Caco-2 (cell line): ENCODE measurements at regions of chr3 and their contacts with region 1.

Region 1: DNA sequence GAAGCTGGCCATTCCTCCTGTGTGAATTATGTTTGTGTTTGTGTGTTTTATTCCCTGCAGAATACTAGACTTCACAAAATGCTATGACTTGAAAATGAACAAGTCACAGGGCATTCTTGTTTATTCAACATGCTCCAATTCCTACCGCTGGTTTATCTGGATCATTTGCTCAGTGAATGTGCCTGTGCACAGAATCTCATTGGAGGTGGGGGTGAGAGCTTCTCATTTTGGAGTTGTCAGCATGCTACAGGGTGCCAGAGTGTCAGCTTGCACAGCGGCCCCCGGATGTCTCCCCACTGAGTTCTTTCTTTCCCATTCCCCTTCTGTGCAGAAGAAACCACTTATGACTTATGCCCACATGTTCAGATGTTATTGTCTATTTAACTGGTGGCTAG is 428.7 kb downstream of the ROBO2 start:
- DNase-seq: no peak
- H3K4me3 ChIP-seq: no peak overlapping the region
- H3K4me3 Mint-ChIP-seq: no peak overlapping the region
- H3K27ac Mint-ChIP-seq: no peak overlapping the region
- H3K4me1 ChIP-seq: no peaks in the 10 kb centered on the region
- H3K4me1 Mint-ChIP-seq: no peaks in the 10 kb centered on the region
- H3K27me3 ChIP-seq: no peaks in the 10 kb centered on the region
- H3K27me3 Mint-ChIP-seq: no peaks in the 10 kb centered on the region
- CTCF ChIP-seq: no peak

Region 2: GRCh38 chr3:77348231-77348855 is 120.3 kb before region 1 on chr3:
- CTCF ChIA-PET with region 1: interaction called, 3 read pairs
- POLR2A ChIA-PET with region 1: no interaction called
- intact Hi-C with region 1: loop called (anchors 1 kb)
- DNase-seq: peak; percentile 33 to 34
- H3K4me3 ChIP-seq: no peak overlapping the region
- H3K4me3 Mint-ChIP-seq: no peak overlapping the region
- H3K27ac Mint-ChIP-seq: no peak overlapping the region
- H3K4me1 ChIP-seq: no peaks in the 10 kb centered on the region
- H3K4me1 Mint-ChIP-seq: no peaks in the 10 kb centered on the region
- H3K27me3 ChIP-seq: no peaks in the 10 kb centered on the region
- H3K27me3 Mint-ChIP-seq: peaks cover 3% of the 10 kb centered on the region
- CTCF ChIP-seq: peak; percentile 18 to 39